ENCODE measurements at regions of chr1 and their contacts with region 1.

Region 1: GRCh38 chr1:173409613-173410012 is 67.5 kb upstream of the PRDX6 start:
- DNase-seq: peak; percentile 37 to 42
- ATAC-seq: peak in 5 of 8 donors; percentile 63 to 75 (median 66)
- H3K4me3 ChIP-seq: no peak overlapping the region
- H3K27ac ChIP-seq: no peak overlapping the region
- H3K4me1 ChIP-seq: peaks cover 0 to 51% (median 26%) of the 10 kb centered on the region in 9 donors
- H3K27me3 ChIP-seq: no peaks in the 10 kb centered on the region
- CTCF ChIP-seq: no peak

Region 2: DNA sequence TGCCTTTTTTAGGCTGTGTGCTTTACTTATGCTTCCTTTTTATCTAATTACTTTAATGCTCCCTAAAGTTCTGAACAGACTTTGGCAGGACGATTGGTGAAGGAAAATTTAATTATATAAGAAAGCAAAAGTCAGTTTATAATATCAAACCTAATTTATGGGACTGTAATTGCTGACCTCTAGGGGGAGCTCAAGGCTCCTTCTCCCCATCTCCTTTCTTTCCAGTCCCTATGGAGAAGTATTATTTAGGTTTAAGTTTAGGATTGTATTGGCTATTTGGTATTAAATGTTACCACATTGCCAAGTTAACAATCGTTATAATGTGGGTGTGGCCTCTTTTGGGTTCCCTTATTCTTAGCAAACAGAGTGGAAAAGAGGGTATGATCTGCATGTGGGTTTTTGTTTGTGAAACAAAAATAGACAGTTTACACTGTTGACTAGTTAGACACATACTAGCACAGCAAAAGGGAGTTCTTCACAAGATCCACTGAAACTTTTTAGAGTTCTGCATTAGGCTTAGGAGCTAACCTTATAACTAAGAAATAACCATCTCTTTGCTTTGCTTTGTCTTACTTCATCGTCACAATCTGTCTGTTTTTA is 154.3 kb before region 1 on chr1:
- intact Hi-C with region 1: loop called in 4 of 10 experiments (anchors 10 kb)
- DNase-seq: peak in 1 of 2 donors; percentile 5
- ATAC-seq: no peak
- H3K4me3 ChIP-seq: no peak overlapping the region
- H3K27ac ChIP-seq: no peak overlapping the region
- H3K4me1 ChIP-seq: peaks cover 0 to 6% (median 0%) of the 10 kb centered on the region in 9 donors
- H3K27me3 ChIP-seq: no peaks in the 10 kb centered on the region
- CTCF ChIP-seq: peak; percentile 52 to 84 (median 71)

Measured in heart right ventricle (tissue), 16 donors.